HEK293 (cell line): ENCODE measurements at regions of chr1 and their contacts with region 1.

Region 1: DNA sequence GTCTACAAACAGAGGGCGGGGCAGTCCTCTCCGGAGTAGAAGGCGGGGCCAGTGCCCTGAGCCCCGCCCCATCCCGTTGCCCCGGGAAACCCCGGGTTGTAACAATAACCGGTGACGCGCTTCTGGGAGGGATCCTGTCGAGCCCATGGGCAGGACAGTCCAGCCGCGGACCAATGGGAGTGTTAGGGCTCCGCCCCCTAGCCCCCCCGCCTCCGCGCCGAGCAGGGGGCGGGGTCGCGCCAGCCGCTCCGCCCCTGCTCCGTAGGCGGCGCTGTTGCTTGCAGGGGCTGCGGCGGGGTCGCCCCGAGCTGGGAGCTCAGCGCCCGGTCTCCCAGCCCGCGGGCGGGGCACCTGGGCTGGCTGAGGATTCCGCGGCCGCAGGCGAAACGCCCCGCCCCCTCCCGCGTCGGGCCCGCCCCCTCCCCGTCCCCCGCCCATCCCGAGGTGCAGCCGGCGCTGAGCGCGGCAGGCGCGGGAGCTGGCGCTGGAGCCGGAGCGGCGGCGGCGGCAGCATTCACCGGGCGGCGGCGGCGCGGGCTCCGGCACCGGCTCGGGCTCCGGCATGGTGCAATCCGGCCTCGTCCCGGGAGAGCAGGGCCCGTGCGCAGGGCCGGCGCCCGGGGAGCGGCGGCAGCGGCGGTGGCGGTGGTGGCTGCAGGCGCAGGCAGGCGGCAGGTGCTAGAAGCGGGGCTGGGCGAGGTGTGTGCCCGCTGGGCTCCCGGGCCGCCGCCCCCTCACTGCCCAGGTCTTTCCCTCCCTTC is at the start of gene FOXO6:
- H3K4me3 ChIP-seq: peak within 1 kb of the TSS; percentile 49
- H3K27ac ChIP-seq: peak within 1 kb of the TSS; percentile 69; the same call in 1 of the 2 replicates
- H3K4me1 ChIP-seq: peaks cover 9% of the 10 kb centered on the region
- CTCF ChIP-seq: peak; percentile 41; the same call in 1 of the 2 replicates

Region 2: GRCh38 chr1:41152622-41153044 is 208.5 kb before region 1 on chr1:
- CTCF ChIA-PET with region 1: no interaction called
- POLR2A ChIA-PET with region 1: no interaction called
- H3K4me3 ChIP-seq: no peak overlapping the region
- H3K27ac ChIP-seq: no peak overlapping the region
- H3K4me1 ChIP-seq: no peaks in the 10 kb centered on the region
- CTCF ChIP-seq: no peak

Region 3: DNA sequence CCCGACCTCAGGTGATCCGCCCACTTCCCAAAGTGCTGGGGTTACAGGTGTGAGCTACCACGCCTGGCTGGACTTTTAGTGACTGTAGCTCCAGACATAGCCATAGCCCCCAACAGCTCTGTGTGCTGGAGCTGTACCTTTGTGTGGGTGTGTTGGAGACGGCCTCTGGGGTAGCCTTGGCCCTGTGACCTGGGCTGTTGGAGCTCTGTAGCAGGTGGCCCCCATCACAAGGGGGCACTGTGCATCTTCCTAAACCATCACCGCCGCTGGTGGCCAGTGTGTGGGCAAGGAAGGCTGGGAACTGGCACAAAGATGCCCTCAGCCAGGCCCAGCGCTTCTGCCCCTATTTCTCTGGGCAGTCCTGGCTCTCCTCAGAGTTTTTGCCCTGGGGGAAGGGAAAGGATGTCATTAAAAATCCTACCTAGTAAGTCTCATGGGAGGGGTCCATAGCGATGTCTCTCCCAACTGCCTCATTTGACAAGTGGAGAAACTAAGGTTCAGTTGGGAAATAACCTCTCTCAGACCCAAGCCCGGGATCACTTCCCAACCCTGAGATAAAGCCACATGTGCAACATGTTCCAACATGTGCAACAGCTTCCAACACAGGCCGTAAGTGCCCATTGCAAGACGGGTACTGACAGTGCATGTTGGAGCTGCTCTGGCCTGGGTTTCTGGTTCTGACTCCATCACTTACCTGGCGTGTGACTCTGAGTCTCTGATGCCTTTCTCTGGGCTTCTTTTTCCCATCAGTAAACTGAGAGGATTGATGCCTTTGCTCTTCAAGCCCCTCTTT is 38.1 kb before region 1 on chr1:
- CTCF ChIA-PET with region 1: interaction called, 27 read pairs
- POLR2A ChIA-PET with region 1: interaction called, 4 read pairs
- H3K4me3 ChIP-seq: no peak overlapping the region
- H3K27ac ChIP-seq: no peak overlapping the region
- H3K4me1 ChIP-seq: no peaks in the 10 kb centered on the region
- CTCF ChIP-seq: peak; percentile 70

Region 4: DNA sequence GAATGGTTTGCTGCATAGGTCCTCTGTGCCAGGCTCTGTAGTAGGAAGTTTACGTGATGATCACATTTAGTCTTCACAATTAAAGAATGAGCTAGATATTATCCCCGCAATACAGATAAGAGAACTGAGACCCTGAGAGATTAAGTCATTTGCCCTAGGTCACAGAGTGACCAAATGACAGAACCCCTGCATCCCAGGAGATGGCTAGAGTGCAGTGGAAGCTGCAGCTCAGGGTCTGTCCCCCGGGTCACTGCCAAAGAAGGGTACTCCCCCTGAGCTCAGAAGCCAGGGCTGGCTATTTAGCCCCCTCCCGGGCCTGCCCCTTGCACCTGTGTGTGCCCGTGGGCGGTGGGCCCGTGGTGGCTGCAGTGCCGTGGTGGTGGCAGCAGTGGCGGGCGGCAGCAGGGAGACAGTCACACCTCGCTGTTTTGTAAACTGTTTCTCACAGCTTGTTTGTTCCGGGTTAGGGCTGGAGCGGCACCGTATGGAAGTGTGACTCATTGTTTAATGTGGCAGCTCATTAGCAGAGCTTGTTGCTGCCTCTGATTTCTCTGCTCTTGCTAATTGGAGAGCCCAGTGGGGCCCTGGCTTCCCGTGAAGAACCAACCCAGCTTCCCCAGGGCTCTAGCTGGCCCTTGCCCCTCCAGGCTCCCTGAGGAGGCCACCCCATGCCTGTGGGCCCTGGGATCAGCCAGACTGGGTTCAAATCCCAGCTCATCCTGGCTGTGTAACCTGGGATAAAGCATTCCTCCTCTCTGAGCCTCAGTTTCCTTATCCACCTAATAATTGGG is 19.2 kb before region 1 on chr1:
- CTCF ChIA-PET with region 1: interaction called, 14 read pairs
- POLR2A ChIA-PET with region 1: interaction called, 15 read pairs
- H3K4me3 ChIP-seq: no peak overlapping the region
- H3K27ac ChIP-seq: no peak overlapping the region
- H3K4me1 ChIP-seq: peaks cover 6% of the 10 kb centered on the region; the same call in 1 of the 2 replicates
- CTCF ChIP-seq: no peak

Region 5: DNA sequence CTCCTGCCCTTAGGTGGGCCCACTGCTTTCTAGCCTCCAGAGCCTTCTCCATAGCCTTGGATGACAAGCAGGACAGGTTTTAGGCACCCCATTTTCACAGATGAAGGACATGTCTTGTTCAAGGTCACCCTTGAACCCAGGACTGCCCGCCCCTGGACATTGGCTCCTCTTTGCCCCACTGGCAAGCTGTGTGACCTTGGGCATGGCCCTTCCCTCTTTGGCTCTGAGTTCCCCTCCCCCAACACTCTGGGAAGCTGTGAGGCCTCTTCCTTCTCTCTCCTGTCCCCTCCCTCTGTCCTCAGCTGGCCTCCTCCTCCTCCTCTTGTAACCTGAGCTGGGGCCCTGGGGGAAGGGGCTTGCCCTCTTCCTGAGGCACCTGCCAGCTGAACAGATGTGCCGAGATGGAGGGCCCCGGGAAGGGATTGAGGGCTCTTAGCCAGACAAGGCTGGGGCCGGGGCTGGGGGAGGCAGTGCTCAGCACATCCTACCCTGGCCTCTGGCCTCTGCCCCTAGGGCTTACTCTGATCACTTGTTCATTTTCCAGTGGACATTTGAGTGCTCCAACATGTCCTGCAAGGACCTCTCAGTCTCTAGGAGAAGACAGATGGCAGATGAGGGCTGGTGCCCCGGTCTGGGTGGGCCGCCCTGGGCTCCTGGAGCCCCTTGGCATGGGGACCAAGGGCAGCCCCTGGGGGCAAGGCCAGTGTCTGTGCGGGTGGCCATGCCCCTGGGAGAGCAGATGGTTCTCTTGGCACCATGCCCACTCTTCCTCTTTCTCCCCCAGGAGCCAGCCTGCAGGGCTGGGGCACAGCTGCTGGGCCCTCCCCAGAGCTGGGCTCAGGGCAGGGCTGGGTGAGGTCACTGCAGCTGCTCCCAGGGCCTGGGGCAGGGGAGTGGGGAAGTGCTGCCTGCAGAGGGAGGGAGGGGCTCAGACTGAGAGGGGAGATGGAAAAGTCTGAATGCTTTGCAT is 10.7 kb after region 1 on chr1:
- CTCF ChIA-PET with region 1: interaction called, 6 read pairs
- POLR2A ChIA-PET with region 1: interaction called, 17 read pairs
- H3K4me3 ChIP-seq: no peak overlapping the region
- H3K27ac ChIP-seq: no peak overlapping the region; the same call in 1 of the 2 replicates
- H3K4me1 ChIP-seq: peaks cover 14% of the 10 kb centered on the region
- CTCF ChIP-seq: no peak

Region 6: GRCh38 chr1:41416552-41417334 is 55.6 kb after region 1 on chr1:
- CTCF ChIA-PET with region 1: interaction called, 18 read pairs
- POLR2A ChIA-PET with region 1: interaction called, 7 read pairs
- H3K4me3 ChIP-seq: no peak overlapping the region
- H3K27ac ChIP-seq: no peak overlapping the region
- H3K4me1 ChIP-seq: no peaks in the 10 kb centered on the region
- CTCF ChIP-seq: peak; percentile 93